ENCODE measurements at regions of chr17 and their contacts with region 1.

Region 1: GRCh38 chr17:42577532-42578281 is at the start of gene PSMC3IP:
- DNase-seq: peak; percentile 73 to 94 (median 91)
- ATAC-seq: peak; percentile 91
- H3K4me3 ChIP-seq: peak within 1 kb of the TSS; percentile 97 to 98
- H3K4me3 Mint-ChIP-seq: peak within 1 kb of the TSS; percentile 99
- H3K27ac ChIP-seq: peak within 1 kb of the TSS; percentile 76 to 88
- H3K27ac Mint-ChIP-seq: peak within 1 kb of the TSS; percentile 94
- H3K4me1 ChIP-seq: peaks cover 15% of the 10 kb centered on the region
- H3K4me1 Mint-ChIP-seq: peaks cover 29% of the 10 kb centered on the region
- H3K27me3 ChIP-seq: no peaks in the 10 kb centered on the region
- H3K27me3 Mint-ChIP-seq: no peaks in the 10 kb centered on the region
- CTCF ChIP-seq: no peak
- total RNA-seq, gene PSMC3IP: 3.9 to 4.1 TPM

Region 2: GRCh38 chr17:42548070-42548837 is 29.5 kb before region 1 on chr17:
- CTCF ChIA-PET with region 1: interaction called, 9 read pairs
- POLR2A ChIA-PET with region 1: no interaction called
- intact Hi-C with region 1: loop called in 1 of 2 experiments (anchors 1 kb)
- DNase-seq: peak; percentile 55 to 86 (median 81)
- ATAC-seq: peak; percentile 98
- H3K4me3 ChIP-seq: peak overlapping the region; percentile 35 to 45
- H3K4me3 Mint-ChIP-seq: peak overlapping the region; percentile 58
- H3K27ac ChIP-seq: no peak overlapping the region
- H3K27ac Mint-ChIP-seq: no peak overlapping the region
- H3K4me1 ChIP-seq: peaks cover 8% of the 10 kb centered on the region
- H3K4me1 Mint-ChIP-seq: peaks cover 25% of the 10 kb centered on the region
- H3K27me3 ChIP-seq: no peaks in the 10 kb centered on the region
- H3K27me3 Mint-ChIP-seq: no peaks in the 10 kb centered on the region
- CTCF ChIP-seq: peak; percentile 53

Region 3: GRCh38 chr17:42677008-42677857 is 99.5 kb after region 1 on chr17:
- CTCF ChIA-PET with region 1: interaction called, 33 read pairs
- POLR2A ChIA-PET with region 1: interaction called, 11 read pairs
- intact Hi-C with region 1: loop called (anchors 1 kb)
- DNase-seq: peak; percentile 94 to 99 (median 97)
- ATAC-seq: peak; percentile 85
- H3K4me3 ChIP-seq: peak overlapping the region; percentile 54 to 62
- H3K4me3 Mint-ChIP-seq: peak overlapping the region; percentile 87
- H3K27ac ChIP-seq: peak overlapping the region; percentile 25 to 49
- H3K27ac Mint-ChIP-seq: peak overlapping the region; percentile 27
- H3K4me1 ChIP-seq: peaks cover 65% of the 10 kb centered on the region
- H3K4me1 Mint-ChIP-seq: peaks cover 51% of the 10 kb centered on the region
- H3K27me3 ChIP-seq: peaks cover 31 to 58% of the 10 kb centered on the region in 2 experiments
- H3K27me3 Mint-ChIP-seq: peaks cover 41% of the 10 kb centered on the region
- CTCF ChIP-seq: no peak

Region 4: DNA sequence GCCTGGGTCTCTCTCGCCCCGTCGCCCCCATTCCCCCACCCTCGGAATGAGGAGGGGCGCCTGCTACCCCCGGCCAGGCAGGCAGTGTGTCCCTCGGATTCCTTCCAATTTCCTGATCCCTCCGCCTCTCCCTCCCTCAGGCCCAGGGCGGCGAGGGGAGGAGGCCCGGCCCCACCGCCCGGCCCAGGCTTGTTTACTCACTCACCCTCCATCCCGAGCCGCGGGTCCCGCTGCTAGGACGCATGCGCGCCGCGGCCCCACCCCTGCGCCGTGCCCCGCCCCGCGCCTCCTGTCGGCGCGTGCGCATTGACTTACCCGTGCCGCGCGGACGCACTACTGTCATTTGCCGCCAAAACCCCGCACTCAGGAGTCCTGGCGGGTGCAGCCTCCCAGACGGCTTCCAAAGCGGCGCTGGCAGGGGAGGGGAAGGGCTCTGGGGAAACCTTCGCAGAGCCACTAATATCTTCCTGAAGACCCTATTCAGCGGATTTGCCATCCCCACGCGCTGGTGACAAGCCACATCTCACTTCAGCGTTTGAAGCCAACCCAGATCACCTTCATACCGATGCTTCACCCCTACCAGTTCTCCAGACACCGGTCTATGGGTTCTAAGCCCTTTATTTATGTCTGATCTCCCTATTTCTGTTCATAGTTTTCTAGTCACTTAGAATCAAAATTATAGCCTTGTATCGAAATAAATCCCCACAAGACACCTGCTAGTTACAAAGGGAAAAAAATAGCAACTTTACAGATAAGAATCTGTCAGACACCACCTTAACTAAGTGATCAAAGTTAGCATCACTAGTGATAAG is 167.3 kb after region 1 on chr17 and contains the start of gene EZH1:
- CTCF ChIA-PET with region 1: interaction called, 4 read pairs
- POLR2A ChIA-PET with region 1: no interaction called
- intact Hi-C with region 1: loop called in 1 of 2 experiments (anchors 10 kb)
- DNase-seq: peak; percentile 82 to 96 (median 90)
- ATAC-seq: peak; percentile 92
- H3K4me3 ChIP-seq: peak within 1 kb of the TSS; percentile 72 to 73
- H3K4me3 Mint-ChIP-seq: peak within 1 kb of the TSS; percentile 98
- H3K27ac ChIP-seq: peak within 1 kb of the TSS; percentile 62 to 79
- H3K27ac Mint-ChIP-seq: peak within 1 kb of the TSS; percentile 96
- H3K4me1 ChIP-seq: peaks cover 17% of the 10 kb centered on the region
- H3K4me1 Mint-ChIP-seq: peaks cover 31% of the 10 kb centered on the region
- H3K27me3 ChIP-seq: peaks cover 0 to 4% of the 10 kb centered on the region in 2 experiments
- H3K27me3 Mint-ChIP-seq: peaks cover 13% of the 10 kb centered on the region
- CTCF ChIP-seq: no peak
- total RNA-seq, gene EZH1: 59.2 to 63.4 TPM

Region 5: GRCh38 chr17:42819944-42820535 is 242.3 kb after region 1 on chr17:
- CTCF ChIA-PET with region 1: interaction called, 6 read pairs
- POLR2A ChIA-PET with region 1: no interaction called
- intact Hi-C with region 1: loop called in 1 of 2 experiments (anchors 2 kb)
- DNase-seq: peak; percentile 26 to 74 (median 63)
- ATAC-seq: peak; percentile 24
- H3K4me3 ChIP-seq: no peak overlapping the region
- H3K4me3 Mint-ChIP-seq: no peak overlapping the region
- H3K27ac ChIP-seq: no peak overlapping the region
- H3K27ac Mint-ChIP-seq: no peak overlapping the region
- H3K4me1 ChIP-seq: peaks cover 13% of the 10 kb centered on the region
- H3K4me1 Mint-ChIP-seq: peaks cover 34% of the 10 kb centered on the region
- H3K27me3 ChIP-seq: no peaks in the 10 kb centered on the region
- H3K27me3 Mint-ChIP-seq: no peaks in the 10 kb centered on the region
- CTCF ChIP-seq: peak; percentile 73